ENCODE measurements at regions of chr1 and their contacts with region 1.

Region 1: DNA sequence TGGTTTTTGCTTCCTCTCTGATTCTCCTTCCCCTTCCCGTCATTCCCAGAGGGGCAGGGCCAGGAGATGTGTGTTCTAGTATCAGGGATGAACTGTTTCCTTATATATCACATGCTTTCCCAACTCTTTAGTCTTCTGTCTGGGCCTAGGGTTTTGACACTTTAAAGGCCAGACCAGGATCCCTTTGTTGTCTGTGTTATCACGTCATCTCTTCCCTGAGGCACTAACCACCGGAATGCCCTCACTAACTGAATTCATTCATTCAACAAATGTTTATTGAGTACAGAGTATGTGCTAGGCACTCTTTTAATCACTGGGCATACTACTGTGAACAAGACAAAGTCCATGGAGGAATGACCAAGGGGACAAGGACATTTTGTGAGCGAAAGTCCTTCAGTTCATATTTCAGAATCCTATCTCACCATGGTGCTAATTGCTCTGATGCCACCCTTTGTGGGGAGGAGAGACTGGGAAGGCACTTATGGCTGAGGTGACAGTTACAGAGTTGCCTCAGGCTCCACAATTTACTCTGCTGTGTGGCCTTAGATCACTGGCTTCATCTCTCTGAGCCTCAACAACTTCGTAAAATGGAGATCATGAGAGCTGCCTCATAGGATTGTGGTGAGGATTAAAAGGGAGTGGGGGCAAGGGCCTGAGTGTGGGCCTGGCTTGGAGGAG is 12.0 kb upstream of the ZNF362 start:
- DNase-seq: peak; percentile 57 to 90
- H3K4me3 ChIP-seq: no peak overlapping the region
- H3K27ac ChIP-seq: peak overlapping the region; percentile 62
- H3K4me1 ChIP-seq: peaks cover 31% of the 10 kb centered on the region
- H3K27me3 ChIP-seq: no peaks in the 10 kb centered on the region
- CTCF ChIP-seq: no peak

Region 2: DNA sequence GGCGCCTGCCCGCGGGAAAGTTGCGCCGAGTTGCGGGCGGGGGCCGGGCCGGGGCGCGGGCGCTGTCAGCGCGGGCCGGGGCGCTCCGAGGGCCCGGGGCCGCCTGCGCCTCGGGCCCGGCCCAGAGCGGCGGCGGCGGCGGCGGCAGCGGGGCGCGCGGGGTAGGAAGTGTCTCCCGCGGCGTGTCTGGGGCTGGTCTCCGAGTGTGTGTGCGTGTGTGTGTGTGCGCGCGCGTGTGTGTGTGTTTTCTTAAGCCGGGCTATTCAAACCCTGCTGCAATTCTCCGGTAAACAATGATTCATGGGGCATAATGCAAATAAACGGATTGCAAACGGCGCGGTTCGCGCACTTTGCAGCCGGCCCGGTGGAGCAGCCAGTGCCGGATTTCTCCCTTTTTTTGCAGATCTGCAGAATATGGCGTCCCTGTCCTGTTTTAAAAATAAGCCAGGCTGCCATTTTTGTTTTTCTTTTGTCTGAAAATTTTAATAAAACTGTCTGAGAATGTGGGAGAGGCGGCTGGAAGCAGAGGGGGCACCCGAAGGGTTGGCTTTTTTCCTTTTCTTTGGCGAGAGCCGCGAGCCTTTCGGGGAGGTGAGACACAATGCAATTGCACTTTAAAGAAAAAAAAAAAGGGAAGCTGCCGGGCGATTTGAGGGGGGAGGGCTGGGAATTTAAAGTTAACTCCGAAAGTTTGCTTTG is 12.6 kb after region 1 on chr1:
- CTCF ChIA-PET with region 1: no interaction called
- POLR2A ChIA-PET with region 1: interaction called, 4 read pairs
- intact Hi-C with region 1: loop called (anchors 1 kb)
- DNase-seq: peak; percentile 41 to 77
- H3K4me3 ChIP-seq: peak overlapping the region; percentile 67
- H3K27ac ChIP-seq: peak overlapping the region; percentile 62
- H3K4me1 ChIP-seq: peaks cover 22% of the 10 kb centered on the region
- H3K27me3 ChIP-seq: no peaks in the 10 kb centered on the region
- CTCF ChIP-seq: no peak

Region 3: DNA sequence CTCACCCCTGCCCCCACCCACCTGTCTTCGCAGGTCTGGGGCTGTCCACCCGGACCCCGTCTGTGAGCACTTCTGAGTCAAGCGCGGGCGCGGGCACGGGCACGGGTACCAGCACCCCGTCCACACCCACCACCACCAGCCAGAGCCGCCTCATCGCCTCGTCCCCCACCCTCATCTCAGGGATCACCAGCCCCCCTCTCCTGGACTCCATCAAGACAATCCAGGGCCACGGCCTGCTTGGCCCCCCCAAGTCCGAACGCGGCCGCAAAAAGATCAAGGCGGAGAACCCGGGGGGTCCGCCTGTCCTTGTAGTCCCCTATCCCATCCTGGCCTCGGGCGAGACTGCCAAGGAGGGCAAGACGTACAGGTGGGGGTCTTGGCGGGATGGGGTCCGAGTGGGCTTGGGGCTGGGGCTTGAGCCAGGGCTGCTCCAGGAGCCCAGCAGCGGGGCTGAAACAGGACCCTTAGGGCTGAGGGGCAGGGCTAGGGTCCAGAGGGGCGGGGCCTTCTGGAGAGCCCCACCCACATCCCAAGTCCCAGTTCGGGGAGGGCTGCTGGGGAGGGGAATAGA is 35.9 kb after region 1 on chr1:
- CTCF ChIA-PET with region 1: no interaction called
- POLR2A ChIA-PET with region 1: no interaction called
- intact Hi-C with region 1: no loop called
- DNase-seq: no peak
- H3K4me3 ChIP-seq: no peak overlapping the region
- H3K27ac ChIP-seq: no peak overlapping the region
- H3K4me1 ChIP-seq: no peaks in the 10 kb centered on the region
- H3K27me3 ChIP-seq: no peaks in the 10 kb centered on the region
- CTCF ChIP-seq: no peak

Region 4: GRCh38 chr1:33472349-33472980 is 228.2 kb after region 1 on chr1 and contains the start of gene ZSCAN20:
- CTCF ChIA-PET with region 1: no interaction called
- POLR2A ChIA-PET with region 1: no interaction called
- intact Hi-C with region 1: no loop called
- DNase-seq: peak; percentile 92 to 96
- H3K4me3 ChIP-seq: peak within 1 kb of the TSS; percentile 66
- H3K27ac ChIP-seq: no peak within 1 kb of the TSS
- H3K4me1 ChIP-seq: peaks cover 10% of the 10 kb centered on the region
- H3K27me3 ChIP-seq: no peaks in the 10 kb centered on the region
- CTCF ChIP-seq: no peak
- total RNA-seq, gene ZSCAN20: 6.0 and 6.4 TPM in 2 replicates